Vagina (tissue), 2 donors: ENCODE measurements at regions of chr2 and their contacts with region 1.

Region 1: GRCh38 chr2:109331896-109332848 is 203.2 kb downstream of the SH3RF3 start:
- DNase-seq: no peak
- H3K4me3 ChIP-seq: peak overlapping the region; percentile 12 to 14
- H3K27ac ChIP-seq: peak overlapping the region; percentile 54
- H3K4me1 ChIP-seq: peaks cover 45% of the 10 kb centered on the region
- H3K27me3 ChIP-seq: no peaks in the 10 kb centered on the region
- CTCF ChIP-seq: no peak
- POLR2A ChIP-seq: no peak

Region 2: DNA sequence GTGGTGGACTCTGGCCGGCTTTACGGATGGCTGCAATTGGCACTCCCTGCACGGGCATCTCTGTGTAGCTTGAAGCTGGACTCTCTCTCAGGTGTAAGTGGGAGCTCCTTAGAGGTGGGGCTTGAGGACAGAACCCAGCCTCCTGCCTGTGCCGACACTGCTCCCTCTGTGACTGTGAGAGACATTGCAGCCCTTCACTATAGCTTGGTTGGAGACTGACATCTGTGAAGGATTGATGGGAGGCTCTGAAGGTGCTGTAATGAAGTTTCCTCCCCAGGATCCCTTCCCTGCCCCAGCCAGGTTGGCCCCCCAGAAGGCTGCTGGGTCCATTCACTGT is 36.4 kb before region 1 on chr2:
- intact Hi-C with region 1: loop called (anchors 1 kb)
- DNase-seq: no peak
- H3K4me3 ChIP-seq: no peak overlapping the region
- H3K27ac ChIP-seq: no peak overlapping the region
- H3K4me1 ChIP-seq: no peaks in the 10 kb centered on the region
- H3K27me3 ChIP-seq: no peaks in the 10 kb centered on the region
- CTCF ChIP-seq: no peak
- POLR2A ChIP-seq: no peak